GM10248 (cell line): ENCODE measurements at regions of chr6 and their contacts with region 1.

Region 1: GRCh38 chr6:11496152-11497060 is 41.1 kb upstream of the TMEM170B start:
- DNase-seq: peak; percentile 72
- CTCF ChIP-seq: peak; percentile 75

Region 2: GRCh38 chr6:11139056-11139960 is 357.1 kb before region 1 on chr6:
- CTCF ChIA-PET with region 1: interaction called, 79 read pairs
- POLR2A ChIA-PET with region 1: no interaction called
- DNase-seq: no peak
- CTCF ChIP-seq: no peak

Region 3: DNA sequence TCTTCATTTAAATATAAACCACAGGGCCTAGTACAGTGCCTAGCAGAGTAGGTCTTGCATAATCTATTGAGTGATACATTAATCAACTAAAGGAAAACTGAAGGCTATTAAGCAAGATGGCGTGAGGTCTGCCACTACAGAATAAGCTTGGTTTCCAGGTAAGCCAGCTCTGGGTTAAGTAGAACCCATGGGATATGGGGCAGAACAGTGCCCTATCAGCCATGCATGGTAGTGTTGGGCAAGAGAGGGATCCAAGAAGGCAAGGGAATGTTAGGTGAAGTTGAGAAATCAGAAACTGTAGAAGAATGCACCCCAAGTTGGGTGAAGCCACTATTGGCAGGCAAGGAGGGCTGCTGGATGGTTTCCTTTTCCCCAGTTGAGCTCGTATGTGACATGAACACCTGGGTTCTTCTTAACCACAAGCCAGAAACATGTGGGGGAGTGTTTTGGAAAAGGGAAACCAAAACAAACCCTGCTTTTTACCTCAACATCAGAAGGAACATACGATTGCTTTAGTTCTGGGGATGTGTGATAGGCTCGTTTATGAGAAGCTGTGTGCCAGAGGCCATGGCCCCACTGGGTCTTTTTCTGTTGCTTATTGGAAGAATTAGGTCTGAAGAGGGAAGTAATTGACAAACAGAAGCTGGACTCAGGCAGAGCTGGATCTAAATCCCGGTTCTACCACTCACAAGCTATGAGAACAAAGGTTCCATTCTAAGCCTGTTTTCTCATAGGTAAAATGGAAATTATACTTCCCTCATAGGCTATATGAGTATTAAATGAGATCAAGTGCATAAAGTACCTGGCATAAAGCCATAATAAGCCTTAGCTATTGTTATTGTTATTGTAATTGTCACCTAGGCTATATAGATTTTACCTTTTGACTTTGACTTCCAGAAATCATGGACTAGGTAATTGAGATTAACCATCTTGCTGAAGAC is 297.5 kb before region 1 on chr6:
- CTCF ChIA-PET with region 1: interaction called, 13 read pairs
- POLR2A ChIA-PET with region 1: no interaction called
- DNase-seq: peak; percentile 20
- CTCF ChIP-seq: no peak

Region 4: GRCh38 chr6:11315743-11316438 is 180.5 kb before region 1 on chr6:
- CTCF ChIA-PET with region 1: interaction called, 18 read pairs
- POLR2A ChIA-PET with region 1: no interaction called
- DNase-seq: no peak
- CTCF ChIP-seq: no peak

Region 5: DNA sequence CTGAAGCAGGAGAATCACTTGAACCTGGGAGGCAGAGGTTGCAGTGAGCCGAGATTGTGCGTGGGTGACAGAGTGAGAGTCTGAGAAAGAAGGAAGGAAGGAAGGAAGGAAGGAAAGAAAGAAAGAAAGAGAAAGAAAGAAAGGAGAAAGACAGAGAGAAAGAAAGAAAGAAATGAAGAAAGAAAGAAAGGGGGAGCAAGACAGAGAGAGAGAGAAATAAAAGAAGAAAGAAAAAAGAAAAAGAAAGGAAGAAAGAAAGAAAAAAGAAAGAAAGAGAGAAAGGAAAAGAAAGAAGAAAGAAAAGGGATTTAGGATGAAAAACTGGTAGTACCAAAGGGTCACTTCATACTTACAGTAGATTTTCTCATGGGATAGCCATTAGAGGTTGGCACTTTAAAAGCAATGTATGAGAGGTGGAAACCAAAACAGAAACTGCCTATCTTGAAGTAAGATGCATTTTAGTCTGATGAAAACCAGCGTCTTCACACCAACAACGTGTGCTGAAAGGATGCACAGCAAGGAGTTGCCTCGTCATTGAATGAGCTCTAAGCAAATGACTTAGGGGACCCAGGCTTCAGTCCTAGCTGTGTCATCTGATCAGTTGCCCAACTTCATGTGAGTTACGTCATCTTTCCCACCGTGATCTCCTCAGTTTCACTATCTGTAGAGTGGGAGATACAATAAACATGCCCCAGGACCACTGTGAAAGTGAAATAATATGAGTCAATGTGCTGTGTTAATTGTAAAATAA is 130.0 kb before region 1 on chr6:
- CTCF ChIA-PET with region 1: interaction called, 43 read pairs
- POLR2A ChIA-PET with region 1: no interaction called
- DNase-seq: peak; percentile 72
- CTCF ChIP-seq: no peak

Region 6: GRCh38 chr6:11460001-11460668 is 36.3 kb before region 1 on chr6:
- CTCF ChIA-PET with region 1: interaction called, 35 read pairs
- POLR2A ChIA-PET with region 1: interaction called, 4 read pairs
- DNase-seq: peak; percentile 19
- CTCF ChIP-seq: peak; percentile 26

Region 7: GRCh38 chr6:11514672-11515071 is 18.3 kb after region 1 on chr6:
- CTCF ChIA-PET with region 1: interaction called, 37 read pairs
- POLR2A ChIA-PET with region 1: no interaction called
- DNase-seq: peak; percentile 51
- CTCF ChIP-seq: no peak

Region 8: DNA sequence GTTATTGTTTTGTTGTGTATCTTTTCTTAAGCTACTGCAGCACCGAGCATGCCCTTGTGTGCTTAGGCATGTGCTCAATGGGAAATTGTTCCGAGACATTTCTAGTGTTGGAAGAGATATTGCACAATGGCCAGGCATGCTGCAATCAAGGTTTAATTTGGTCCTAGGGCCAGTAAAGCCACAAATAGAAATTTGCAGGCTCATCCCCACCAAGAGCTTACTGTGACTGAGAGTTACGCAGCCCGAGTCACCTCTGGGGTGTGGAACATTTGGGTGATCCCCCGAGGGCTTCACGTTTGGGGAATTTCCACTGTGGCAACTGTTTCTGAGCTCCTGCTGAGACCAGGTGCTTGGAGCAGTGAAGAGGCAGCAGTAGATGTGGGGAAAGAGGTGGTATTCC is 216.4 kb after region 1 on chr6:
- CTCF ChIA-PET with region 1: no interaction called
- POLR2A ChIA-PET with region 1: no interaction called
- DNase-seq: no peak
- CTCF ChIP-seq: no peak